AG04450 (cell line): ENCODE measurements at regions of chr6 and their contacts with region 1.

Region 1: GRCh38 chr6:27728442-27728841 is 183.8 kb downstream of the OR2B2 start:
- DNase-seq: no peak
- H3K4me3 ChIP-seq: no peak overlapping the region
- H3K27ac ChIP-seq: no peak overlapping the region
- H3K27me3 ChIP-seq: no peaks in the 10 kb centered on the region
- CTCF ChIP-seq: no peak

Region 2: DNA sequence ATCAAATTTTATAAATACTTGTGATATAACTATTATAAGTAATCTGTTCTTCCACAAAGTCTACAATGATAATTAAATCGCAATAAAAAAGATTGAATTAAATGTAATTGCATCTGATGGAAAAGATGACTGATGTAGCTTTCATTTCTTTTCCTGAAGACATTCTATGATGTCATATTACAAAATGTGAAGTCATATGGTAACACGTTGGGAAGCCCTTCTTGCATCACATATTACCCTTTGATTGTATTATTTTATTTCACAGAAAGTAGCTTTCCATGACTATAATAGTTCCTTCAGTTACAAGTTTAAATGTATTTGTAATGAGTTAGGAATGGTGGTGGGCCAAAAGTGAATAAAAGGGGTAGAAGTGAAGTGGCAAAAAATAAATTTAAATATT is 202.8 kb after region 1 on chr6:
- CTCF ChIA-PET with region 1: no interaction called
- POLR2A ChIA-PET with region 1: no interaction called
- DNase-seq: no peak
- H3K4me3 ChIP-seq: no peak overlapping the region
- H3K27ac ChIP-seq: no peak overlapping the region
- H3K27me3 ChIP-seq: no peaks in the 10 kb centered on the region
- CTCF ChIP-seq: no peak

Region 3: DNA sequence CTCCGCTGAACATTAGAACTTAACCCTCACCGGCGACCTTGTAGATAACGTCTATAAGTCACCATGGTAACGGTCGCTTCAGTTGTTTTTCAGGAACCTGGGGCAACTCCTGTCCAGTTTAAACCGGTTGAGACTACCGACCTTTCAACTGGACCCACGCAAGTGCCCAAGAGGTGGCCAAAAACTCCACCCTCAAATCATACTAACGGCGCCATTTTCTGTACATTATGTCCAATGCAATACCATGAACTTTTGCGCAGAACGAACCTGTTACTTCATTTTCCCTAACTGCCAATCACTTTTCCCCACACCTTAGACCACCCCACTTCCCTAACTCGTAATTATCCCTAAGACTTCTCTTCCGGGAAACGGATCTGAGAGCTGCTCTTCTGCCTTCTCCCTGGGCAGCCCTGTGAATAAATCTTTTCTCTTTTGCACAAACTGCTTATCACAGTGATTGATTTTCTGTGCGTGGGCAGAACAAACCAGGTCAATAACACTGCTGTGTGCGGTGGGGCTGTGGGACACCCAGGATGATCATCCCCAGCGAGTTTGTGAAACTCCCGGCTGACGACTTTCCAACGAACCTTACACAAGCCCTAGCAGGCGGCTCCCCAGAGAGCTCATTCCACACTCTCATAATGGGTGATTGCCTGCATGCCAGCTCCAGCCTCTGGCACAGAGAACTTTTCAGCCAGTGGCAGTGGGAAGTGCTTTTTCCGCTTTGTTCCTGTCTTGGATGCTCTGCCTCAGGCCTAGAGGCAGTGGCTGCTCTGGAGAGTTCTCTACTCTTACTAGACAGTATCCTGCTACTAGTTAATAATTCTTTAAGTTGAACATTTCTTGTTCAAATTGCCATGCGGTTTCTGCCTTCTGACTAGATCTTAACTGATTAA is 825.8 kb after region 1 on chr6:
- CTCF ChIA-PET with region 1: interaction called, 10 read pairs
- POLR2A ChIA-PET with region 1: no interaction called
- DNase-seq: no peak
- H3K4me3 ChIP-seq: no peak overlapping the region
- H3K27ac ChIP-seq: no peak overlapping the region
- H3K27me3 ChIP-seq: peaks cover 9% of the 10 kb centered on the region
- CTCF ChIP-seq: no peak